Activated naive CD4-positive, alpha-beta T cell treated with anti-CD3 and anti-CD28 coated beads, Interleukin-2, amount 10 ng/mL, durations not matched to agents 7 days and 5 days (primary cell): ENCODE measurements at regions of chr3 and their contacts with region 1.

Region 1: GRCh38 chr3:4504340-4505261 is 11.5 kb downstream of the ITPR1 start:
- DNase-seq: peak; percentile 44
- H3K4me3 Mint-ChIP-seq: peak overlapping the region; percentile 38
- H3K27ac Mint-ChIP-seq: peak overlapping the region; percentile 67
- H3K4me1 Mint-ChIP-seq: peaks cover 40% of the 10 kb centered on the region
- H3K27me3 Mint-ChIP-seq: no peaks in the 10 kb centered on the region

Region 2: DNA sequence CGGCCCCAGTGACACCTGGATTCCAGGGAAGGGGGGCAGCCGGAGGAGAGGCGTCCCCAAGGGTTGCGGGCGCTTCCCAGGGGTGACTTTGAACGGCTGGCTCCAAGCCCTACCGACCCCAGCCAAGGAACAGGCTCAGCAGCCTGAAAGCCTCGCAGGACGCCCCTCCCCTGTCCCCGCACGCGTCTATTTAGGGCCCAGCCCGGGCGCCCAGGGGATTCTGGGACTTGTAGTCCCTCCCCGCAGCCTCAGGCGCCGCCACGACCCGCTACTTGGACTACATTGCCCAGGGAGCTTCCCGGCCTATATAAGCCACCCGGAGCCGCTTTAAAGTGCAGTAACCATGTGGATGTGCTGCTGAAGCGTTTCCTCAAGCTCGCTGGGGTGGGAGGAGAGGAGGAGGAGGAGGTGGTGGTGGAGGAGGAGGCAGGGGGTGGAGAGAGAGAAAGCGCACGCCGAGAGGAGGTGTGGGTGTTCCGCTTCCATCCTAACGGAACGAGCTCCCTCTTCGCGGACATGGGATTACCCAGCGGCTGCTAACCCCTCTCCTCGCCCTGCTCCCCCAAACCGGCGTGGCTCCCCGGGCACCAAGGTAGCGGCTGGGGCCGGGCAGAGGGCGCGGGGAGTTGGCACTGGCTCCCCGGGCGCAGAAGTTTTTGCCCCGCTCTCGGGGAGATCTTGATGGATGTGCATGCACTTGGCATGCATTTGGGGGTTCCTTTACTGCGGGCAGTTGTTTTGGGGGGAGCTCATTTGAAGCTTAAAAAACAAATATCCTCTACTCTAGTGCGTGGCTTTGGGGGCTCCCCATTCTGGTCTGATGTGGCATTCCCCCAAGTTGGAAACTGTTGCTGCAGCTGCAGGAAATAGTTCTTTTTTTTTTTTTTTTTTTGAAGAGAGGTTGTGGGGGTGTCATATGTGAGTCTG is 11.3 kb before region 1 on chr3 and contains the start of gene ITPR1:
- CTCF ChIA-PET with region 1: interaction called, 16 read pairs
- DNase-seq: peak; percentile 99
- H3K4me3 Mint-ChIP-seq: peak within 1 kb of the TSS; percentile 93
- H3K27ac Mint-ChIP-seq: peak within 1 kb of the TSS; percentile 80
- H3K4me1 Mint-ChIP-seq: peaks cover 39% of the 10 kb centered on the region
- H3K27me3 Mint-ChIP-seq: peaks cover 22% of the 10 kb centered on the region